Calu3 (cell line): ENCODE measurements at regions of chr2 and their contacts with region 1.

Region 1: GRCh38 chr2:210171309-210172203 is at the start of gene KANSL1L:
- DNase-seq: peak; percentile 100
- H3K4me3 Mint-ChIP-seq: peak within 1 kb of the TSS; percentile 98
- H3K27ac Mint-ChIP-seq: peak within 1 kb of the TSS; percentile 100
- H3K4me1 Mint-ChIP-seq: peaks cover 23% of the 10 kb centered on the region
- H3K27me3 Mint-ChIP-seq: no peaks in the 10 kb centered on the region
- CTCF ChIP-seq: no peak
- total RNA-seq, gene KANSL1L: 45.9 and 54.0 TPM in 2 replicates

Region 2: GRCh38 chr2:210128961-210129360 is 42.6 kb before region 1 on chr2:
- CTCF ChIA-PET with region 1: no interaction called
- intact Hi-C with region 1: loop called (anchors 5 kb)
- DNase-seq: no peak
- H3K4me3 Mint-ChIP-seq: no peak overlapping the region
- H3K27ac Mint-ChIP-seq: no peak overlapping the region
- H3K4me1 Mint-ChIP-seq: no peaks in the 10 kb centered on the region
- H3K27me3 Mint-ChIP-seq: no peaks in the 10 kb centered on the region
- CTCF ChIP-seq: no peak

Region 3: GRCh38 chr2:210189452-210190143 is 18.0 kb after region 1 on chr2:
- CTCF ChIA-PET with region 1: interaction called, 32 read pairs
- intact Hi-C with region 1: loop called (anchors 1 kb)
- DNase-seq: no peak
- H3K4me3 Mint-ChIP-seq: peak overlapping the region; percentile 41
- H3K27ac Mint-ChIP-seq: peak overlapping the region; percentile 92
- H3K4me1 Mint-ChIP-seq: peaks cover 16% of the 10 kb centered on the region
- H3K27me3 Mint-ChIP-seq: no peaks in the 10 kb centered on the region
- CTCF ChIP-seq: no peak